GM10248 (cell line): ENCODE measurements at regions of chr20 and their contacts with region 1.

Region 1: GRCh38 chr20:53623454-53624211 is 30.0 kb upstream of the ZNF217 start:
- DNase-seq: no peak
- CTCF ChIP-seq: no peak

Region 2: GRCh38 chr20:53611449-53611894 is 12.2 kb before region 1 on chr20:
- CTCF ChIA-PET with region 1: interaction called, 30 read pairs
- POLR2A ChIA-PET with region 1: interaction called, 3 read pairs
- DNase-seq: no peak
- CTCF ChIP-seq: no peak

Region 3: DNA sequence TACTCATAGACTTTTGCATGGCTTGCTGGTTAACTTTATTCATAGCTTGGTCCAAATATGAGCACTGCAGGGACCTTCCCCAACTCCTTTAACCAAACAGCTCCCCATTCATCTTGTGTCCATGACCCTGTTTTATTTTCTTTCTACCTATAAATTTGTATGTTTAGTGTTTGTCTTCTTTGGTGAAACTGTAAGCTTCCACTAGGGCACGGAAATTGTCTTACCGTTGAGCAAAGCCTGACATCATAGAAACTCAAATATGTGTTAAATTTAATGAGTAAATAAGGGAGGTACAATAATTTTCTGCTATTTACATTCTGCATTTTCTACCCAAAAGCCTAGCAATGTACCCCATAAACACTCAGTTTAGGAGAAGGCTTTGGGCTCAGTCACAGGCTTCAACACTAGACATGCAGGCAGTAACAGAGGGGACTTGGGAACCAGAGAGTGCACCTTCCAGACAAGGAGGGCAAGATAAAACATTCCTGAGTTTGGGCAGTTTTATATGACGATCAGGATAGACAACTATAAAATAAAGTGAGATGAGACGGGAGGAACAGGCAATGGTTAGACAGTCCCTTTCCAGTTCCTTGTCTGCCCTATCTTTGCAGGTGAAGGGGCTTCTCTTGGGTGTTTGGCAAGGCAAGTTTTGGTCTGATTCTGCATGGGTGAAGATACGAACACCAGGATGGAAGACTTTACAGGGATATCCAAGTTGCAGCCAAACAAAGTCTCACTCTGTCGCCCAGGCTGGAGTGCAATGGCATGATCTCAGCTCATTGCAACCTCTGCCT is 16.2 kb after region 1 on chr20:
- CTCF ChIA-PET with region 1: interaction called, 11 read pairs
- POLR2A ChIA-PET with region 1: no interaction called
- DNase-seq: no peak
- CTCF ChIP-seq: no peak

Region 4: GRCh38 chr20:53742685-53743081 is 119.0 kb after region 1 on chr20:
- CTCF ChIA-PET with region 1: no interaction called
- POLR2A ChIA-PET with region 1: no interaction called
- DNase-seq: no peak
- CTCF ChIP-seq: no peak

Region 5: DNA sequence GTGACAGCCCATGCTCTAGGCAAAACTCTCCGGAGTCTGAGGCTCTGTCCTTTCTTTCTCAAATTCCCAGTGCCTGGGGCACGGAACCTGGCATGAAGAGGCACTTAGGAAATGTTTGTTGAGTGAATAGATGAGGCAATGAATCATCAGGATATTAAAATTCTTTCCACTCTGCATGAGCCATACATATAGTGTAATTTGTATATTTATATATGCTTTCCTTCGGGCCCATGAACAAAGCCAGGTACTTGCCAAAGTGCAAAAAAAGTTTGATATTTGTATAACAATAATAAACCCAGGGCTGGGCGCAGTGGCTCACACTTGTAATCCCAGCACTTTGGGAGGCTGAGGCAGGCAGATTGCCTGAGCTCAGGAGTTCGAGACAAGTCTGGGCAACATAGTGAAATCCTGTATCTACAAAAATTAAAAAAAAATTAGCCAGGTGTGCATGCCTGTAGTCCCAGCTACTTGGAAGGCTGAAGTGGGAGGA is 182.3 kb after region 1 on chr20:
- CTCF ChIA-PET with region 1: no interaction called
- POLR2A ChIA-PET with region 1: no interaction called
- DNase-seq: no peak
- CTCF ChIP-seq: no peak